ENCODE measurements at regions of chr9 and their contacts with region 1.

Region 1: DNA sequence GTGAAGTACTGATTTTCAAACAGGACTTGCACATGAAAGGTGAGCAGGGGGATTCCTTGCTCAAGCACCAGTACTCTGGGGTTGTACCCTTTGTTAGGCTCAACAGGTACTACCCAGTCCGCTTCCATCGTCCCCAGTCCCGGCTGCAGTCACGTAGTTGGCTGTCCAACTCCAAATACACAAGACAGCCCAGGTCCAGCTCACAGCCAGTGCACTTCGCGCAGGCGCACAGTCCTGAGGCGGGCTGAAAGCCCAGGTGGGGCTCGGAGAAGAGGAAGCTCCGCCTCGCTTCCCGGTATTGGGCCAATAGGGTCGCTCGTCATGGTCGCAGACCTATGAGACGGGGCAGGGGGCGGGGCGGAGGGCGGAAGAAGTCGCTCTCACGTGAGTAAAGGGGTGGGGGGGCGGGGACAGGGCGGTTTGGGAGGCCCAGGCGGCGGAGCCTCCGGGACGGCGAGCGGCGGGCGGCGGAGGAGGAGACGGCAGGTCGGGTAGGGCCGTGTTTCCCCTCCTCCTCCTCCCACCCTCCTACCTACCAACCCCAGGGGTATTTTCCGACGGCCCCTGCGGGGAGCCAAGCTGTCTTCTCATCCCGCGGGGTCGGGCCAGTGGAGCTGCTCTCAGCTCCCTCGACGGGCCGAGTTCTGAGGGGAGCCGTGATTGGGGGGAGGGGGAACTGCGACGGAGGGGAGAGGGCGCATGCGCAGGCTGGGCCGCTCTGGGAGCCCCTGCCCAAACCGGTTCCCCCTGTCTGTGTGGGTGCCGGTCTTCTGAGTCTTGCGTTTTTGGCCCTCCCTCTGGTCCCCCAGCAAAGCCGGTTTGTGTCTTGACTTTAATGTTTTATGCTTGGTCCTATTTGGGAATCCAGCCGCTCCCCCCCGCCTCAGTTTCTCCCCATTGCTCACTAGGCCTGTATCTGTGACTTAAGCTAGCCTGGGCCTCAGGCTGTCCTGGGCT is at the start of gene RABGAP1:
- DNase-seq: peak; percentile 97 to 100
- H3K4me3 ChIP-seq: peak within 1 kb of the TSS; percentile 96 to 97
- H3K27ac ChIP-seq: peak within 1 kb of the TSS; percentile 90 to 93
- H3K4me1 ChIP-seq: peaks cover 9 to 12% of the 10 kb centered on the region in 2 donors
- H3K27me3 ChIP-seq: no peaks in the 10 kb centered on the region
- CTCF ChIP-seq: no peak
- total RNA-seq, gene RABGAP1: 36.5 TPM

Region 2: DNA sequence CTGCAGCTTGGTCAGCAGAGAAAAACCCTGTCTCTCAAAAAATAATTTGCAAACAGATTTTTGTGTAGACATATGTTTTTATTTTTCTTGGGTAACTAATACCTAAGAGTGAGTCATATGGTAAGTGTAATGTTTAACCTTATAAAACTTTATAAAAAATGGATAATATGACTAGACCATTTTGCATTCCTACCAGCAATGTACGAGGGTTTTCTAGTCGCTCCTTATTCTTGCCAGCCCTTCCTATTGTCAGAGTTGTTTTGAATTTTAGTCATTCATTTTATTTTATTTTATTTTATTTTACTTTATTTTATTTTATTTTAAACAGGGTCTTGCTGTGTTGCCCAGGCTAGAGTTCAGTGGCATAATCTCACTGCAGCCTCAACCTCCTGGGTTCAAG is 37.7 kb after region 1 on chr9:
- intact Hi-C with region 1: loop called (anchors 5 kb)
- DNase-seq: no peak
- H3K4me3 ChIP-seq: no peak overlapping the region
- H3K27ac ChIP-seq: no peak overlapping the region
- H3K4me1 ChIP-seq: peaks cover 7 to 24% of the 10 kb centered on the region in 2 donors
- H3K27me3 ChIP-seq: no peaks in the 10 kb centered on the region
- CTCF ChIP-seq: no peak

Region 3: GRCh38 chr9:122991370-122991830 is 50.5 kb after region 1 on chr9:
- intact Hi-C with region 1: loop called (anchors 2 kb)
- DNase-seq: peak in 1 of 2 donors; percentile 68
- H3K4me3 ChIP-seq: no peak overlapping the region
- H3K27ac ChIP-seq: peak overlapping the region in 1 of 2 donors; percentile 60
- H3K4me1 ChIP-seq: no peaks in the 10 kb centered on the region
- H3K27me3 ChIP-seq: no peaks in the 10 kb centered on the region
- CTCF ChIP-seq: peak; percentile 53 to 70 (median 57)

Region 4: GRCh38 chr9:123131258-123131657 is 190.4 kb after region 1 on chr9:
- intact Hi-C with region 1: no loop called
- DNase-seq: no peak
- H3K4me3 ChIP-seq: no peak overlapping the region
- H3K27ac ChIP-seq: no peak overlapping the region
- H3K4me1 ChIP-seq: no peaks in the 10 kb centered on the region
- H3K27me3 ChIP-seq: no peaks in the 10 kb centered on the region
- CTCF ChIP-seq: no peak